Mammary epithelial cell (primary cell): ENCODE measurements at regions of chr13 and their contacts with region 1.

Region 1: DNA sequence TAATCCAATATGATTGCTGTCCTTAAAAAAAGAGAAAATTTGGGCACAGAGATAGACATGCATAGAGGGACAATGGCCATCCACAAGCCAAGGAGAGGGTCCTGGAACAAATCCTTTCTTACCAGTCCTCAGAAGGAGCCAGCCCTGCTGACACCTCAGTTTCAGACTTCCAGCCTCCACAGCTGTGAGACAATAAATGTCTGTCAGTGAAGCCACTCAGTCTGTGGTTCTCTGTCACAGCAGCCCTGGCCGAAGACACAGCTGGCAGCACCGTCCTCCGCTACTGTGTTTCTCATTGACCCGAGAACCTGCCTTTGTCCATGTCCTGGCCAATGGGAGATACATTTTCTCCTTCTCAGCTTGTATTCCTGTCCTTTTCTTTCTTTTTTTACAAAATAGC is 207.9 kb downstream of the TM9SF2 start:
- DNase-seq: no peak
- H3K4me3 ChIP-seq: no peak overlapping the region
- H3K27ac ChIP-seq: no peak overlapping the region
- H3K4me1 ChIP-seq: no peaks in the 10 kb centered on the region
- H3K27me3 ChIP-seq: no peaks in the 10 kb centered on the region
- CTCF ChIP-seq: no peak

Region 2: GRCh38 chr13:99749271-99750019 is 40.3 kb after region 1 on chr13:
- CTCF ChIA-PET with region 1: no interaction called
- dilution Hi-C with region 1: loop called (anchors 5 kb)
- in situ Hi-C with region 1: no loop called
- intact Hi-C with region 1: no loop called
- DNase-seq: no peak
- H3K4me3 ChIP-seq: no peak overlapping the region
- H3K27ac ChIP-seq: no peak overlapping the region
- H3K4me1 ChIP-seq: no peaks in the 10 kb centered on the region
- H3K27me3 ChIP-seq: no peaks in the 10 kb centered on the region
- CTCF ChIP-seq: no peak

Region 3: GRCh38 chr13:99792079-99792921 is 83.2 kb after region 1 on chr13:
- CTCF ChIA-PET with region 1: no interaction called
- dilution Hi-C with region 1: loop called (anchors 5 kb)
- in situ Hi-C with region 1: no loop called
- intact Hi-C with region 1: no loop called
- DNase-seq: no peak
- H3K4me3 ChIP-seq: no peak overlapping the region
- H3K27ac ChIP-seq: no peak overlapping the region
- H3K4me1 ChIP-seq: no peaks in the 10 kb centered on the region
- H3K27me3 ChIP-seq: no peaks in the 10 kb centered on the region
- CTCF ChIP-seq: no peak